CD14-positive monocyte (primary cell): ENCODE measurements at regions of chr6 and their contacts with region 1.

Region 1: DNA sequence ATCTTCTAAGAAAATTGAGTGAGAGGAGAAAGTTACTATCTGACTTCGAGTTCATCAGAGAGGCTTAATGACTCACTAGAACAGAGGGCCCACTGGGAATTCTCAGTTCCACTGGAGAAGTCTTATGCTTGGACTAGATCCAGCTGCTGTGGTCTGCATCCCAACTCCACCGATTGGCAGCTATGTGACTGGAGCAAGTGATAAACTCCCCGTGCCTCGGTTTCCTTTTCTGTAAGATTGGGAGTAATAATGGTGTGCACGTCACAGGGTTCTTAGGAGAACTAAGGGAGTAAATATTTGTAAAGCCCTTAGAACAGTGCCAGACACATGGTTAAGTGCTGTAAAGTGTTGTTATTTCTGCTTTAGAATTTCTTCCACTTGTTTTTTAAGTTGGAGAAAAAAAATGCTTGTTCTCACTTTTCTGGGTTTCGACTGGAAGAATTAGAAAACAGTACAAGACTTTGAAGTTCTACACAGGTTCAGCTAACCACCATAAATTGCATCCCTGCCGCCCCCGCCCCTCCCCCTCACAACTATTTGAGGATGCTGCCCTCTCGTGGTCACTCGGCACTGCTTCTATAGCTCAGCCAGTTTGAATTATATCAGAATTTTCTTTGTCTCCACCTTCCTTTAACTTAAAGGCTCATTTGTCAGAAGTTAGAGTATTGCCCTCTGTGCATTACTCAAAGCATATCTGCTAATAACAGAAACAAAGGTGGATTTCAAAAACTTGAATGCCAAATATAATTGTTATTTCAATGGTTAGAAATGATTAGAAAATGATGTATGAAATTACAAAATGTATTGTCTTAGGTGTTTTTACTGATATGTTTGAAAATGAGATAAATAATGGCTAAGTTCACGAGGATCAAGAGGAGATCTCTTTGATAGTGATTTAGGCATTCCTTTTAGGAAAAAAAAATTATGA is 95.0 kb upstream of the IFNGR1 start:
- DNase-seq: peak; percentile 54 to 80 (median 72)
- H3K4me3 ChIP-seq: no peak overlapping the region
- H3K4me3 Mint-ChIP-seq: no peak overlapping the region
- H3K27ac ChIP-seq: no peak overlapping the region
- H3K27ac Mint-ChIP-seq: peak overlapping the region in 1 of 7 donors; percentile 68
- H3K4me1 ChIP-seq: peaks cover 28 to 32% of the 10 kb centered on the region in 2 donors
- H3K4me1 Mint-ChIP-seq: peaks cover 29% of the 10 kb centered on the region
- H3K27me3 ChIP-seq: no peaks in the 10 kb centered on the region
- H3K27me3 Mint-ChIP-seq: peaks cover 0 to 4% (median 3%) of the 10 kb centered on the region in 3 donors
- CTCF ChIP-seq: peak; percentile 83

Region 2: GRCh38 chr6:137148306-137149034 is 165.7 kb before region 1 on chr6:
- intact Hi-C with region 1: loop called (anchors 10 kb)
- DNase-seq: peak; percentile 94 to 99 (median 97)
- H3K4me3 ChIP-seq: peak overlapping the region in 1 of 3 experiments; percentile 3
- H3K4me3 Mint-ChIP-seq: peak overlapping the region in 1 of 2 donors; percentile 19
- H3K27ac ChIP-seq: peak overlapping the region; percentile 73 to 94
- H3K27ac Mint-ChIP-seq: peak overlapping the region; percentile 94 to 98 (median 95)
- H3K4me1 ChIP-seq: peaks cover 39 to 43% of the 10 kb centered on the region in 2 donors
- H3K4me1 Mint-ChIP-seq: peaks cover 52% of the 10 kb centered on the region
- H3K27me3 ChIP-seq: no peaks in the 10 kb centered on the region
- H3K27me3 Mint-ChIP-seq: no peaks in the 10 kb centered on the region
- CTCF ChIP-seq: no peak

Region 3: DNA sequence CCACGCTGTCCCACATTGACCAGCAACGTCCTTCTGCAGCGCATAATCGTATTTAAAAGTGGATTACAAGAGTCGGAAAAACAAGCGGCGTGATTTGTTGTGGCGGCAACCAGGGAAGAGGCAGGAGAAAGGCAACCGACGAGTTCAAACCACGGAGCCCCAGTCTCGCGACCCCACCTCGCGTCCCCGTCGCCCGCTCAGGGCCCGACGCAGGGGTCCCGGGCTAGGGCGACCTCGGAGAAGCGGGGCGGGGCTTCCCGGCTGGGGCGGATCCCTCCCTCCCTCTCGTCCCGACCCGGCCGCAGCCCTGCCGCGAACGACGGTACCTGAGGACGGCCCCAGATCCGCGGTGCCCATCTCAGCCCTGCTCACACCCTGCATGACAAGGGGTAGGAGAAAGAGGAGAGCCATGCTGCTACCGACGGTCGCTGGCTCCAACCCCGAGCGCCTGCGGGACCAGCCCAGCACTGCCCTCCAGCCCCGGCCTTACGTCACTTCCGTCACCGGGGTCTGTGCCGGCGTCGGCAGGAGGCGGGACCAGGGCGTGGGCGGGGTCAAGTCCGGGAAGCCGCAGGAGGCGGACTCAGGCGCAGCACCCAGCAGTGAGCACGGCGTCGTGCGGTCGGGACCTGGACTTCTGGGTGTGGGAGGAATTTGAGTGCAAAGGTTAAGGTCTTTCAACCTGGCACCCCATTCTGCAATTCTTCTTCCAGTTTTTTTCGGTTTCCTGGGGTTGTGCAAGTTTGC is 95.1 kb before region 1 on chr6 and contains the start of gene IFNGR1:
- intact Hi-C with region 1: loop called in 1 of 2 experiments (anchors 5 kb)
- DNase-seq: peak; percentile 93 to 97 (median 97)
- H3K4me3 ChIP-seq: peak within 1 kb of the TSS; percentile 68 to 94 (median 90)
- H3K4me3 Mint-ChIP-seq: peak within 1 kb of the TSS; percentile 94 to 99
- H3K27ac ChIP-seq: peak within 1 kb of the TSS; percentile 99
- H3K27ac Mint-ChIP-seq: peak within 1 kb of the TSS; percentile 99 to 100 (median 100)
- H3K4me1 ChIP-seq: peaks cover 79 to 84% of the 10 kb centered on the region in 2 donors
- H3K4me1 Mint-ChIP-seq: peaks cover 76% of the 10 kb centered on the region
- H3K27me3 ChIP-seq: no peaks in the 10 kb centered on the region
- H3K27me3 Mint-ChIP-seq: peaks cover 0 to 4% (median 0%) of the 10 kb centered on the region in 3 donors
- CTCF ChIP-seq: no peak
- polyA plus RNA-seq, gene IFNGR1: 204 to 372 (median 364) TPM

Region 4: DNA sequence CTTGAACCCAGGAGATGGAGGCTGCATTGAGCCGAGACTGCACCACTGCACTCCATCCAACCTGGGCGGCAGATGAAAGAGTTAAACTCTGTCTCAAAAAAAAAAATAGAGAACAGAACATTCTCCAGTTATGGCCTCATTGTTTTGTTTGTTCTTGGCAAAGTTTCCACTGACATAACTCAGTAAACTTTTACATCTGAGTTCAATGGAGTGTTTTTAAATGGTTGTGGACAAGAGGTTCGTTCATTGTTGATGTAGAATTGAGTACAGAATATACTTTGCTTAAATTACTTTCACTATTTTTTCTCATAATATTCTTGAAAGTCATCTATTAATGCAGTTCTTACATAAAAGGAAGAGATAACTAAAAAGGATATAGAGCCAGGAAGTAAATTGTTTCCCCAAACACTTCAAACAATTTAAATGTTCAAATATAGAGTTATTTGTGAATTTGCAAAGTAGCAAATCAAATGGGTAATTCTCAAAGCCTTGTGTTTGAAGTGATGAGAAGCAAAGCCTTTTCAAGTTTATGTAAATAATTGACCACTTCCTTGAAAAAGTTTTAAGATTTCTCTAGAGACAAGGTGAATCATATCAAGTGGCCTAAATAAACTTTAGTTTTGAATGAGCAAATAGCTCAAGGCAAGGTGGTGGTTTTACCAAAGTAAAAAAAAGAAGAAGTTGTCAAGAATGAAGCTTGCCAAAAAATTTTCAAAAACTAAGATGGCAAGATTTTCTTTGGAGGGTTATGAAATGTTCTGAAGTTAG is 52.6 kb before region 1 on chr6:
- intact Hi-C with region 1: loop called in 1 of 2 experiments (anchors 5 kb)
- DNase-seq: no peak
- H3K4me3 ChIP-seq: no peak overlapping the region
- H3K4me3 Mint-ChIP-seq: no peak overlapping the region
- H3K27ac ChIP-seq: no peak overlapping the region
- H3K27ac Mint-ChIP-seq: no peak overlapping the region
- H3K4me1 ChIP-seq: peaks cover 9 to 14% of the 10 kb centered on the region in 2 donors
- H3K4me1 Mint-ChIP-seq: peaks cover 20% of the 10 kb centered on the region
- H3K27me3 ChIP-seq: no peaks in the 10 kb centered on the region
- H3K27me3 Mint-ChIP-seq: no peaks in the 10 kb centered on the region
- CTCF ChIP-seq: no peak

Region 5: DNA sequence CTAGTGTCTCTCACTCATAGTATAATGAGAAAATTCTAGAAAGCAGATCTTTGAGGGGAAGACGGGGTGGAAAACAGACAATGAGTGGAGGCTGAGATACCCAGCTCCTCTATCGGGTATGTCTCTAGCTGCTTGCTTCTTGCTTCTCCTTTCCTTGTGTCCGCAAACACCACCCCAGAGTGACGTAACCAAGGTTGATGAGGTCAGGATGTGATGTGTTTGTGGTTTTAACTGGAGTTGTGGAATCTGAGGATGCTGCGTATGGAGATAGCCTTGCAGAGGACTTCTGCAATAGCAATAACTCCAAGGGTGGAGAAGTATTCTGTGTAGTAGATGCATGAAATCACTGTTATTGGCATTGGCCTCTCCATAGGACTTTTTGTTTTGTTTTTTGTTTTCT is 37.7 kb after region 1 on chr6:
- intact Hi-C with region 1: no loop called
- DNase-seq: peak; percentile 88 to 97 (median 95)
- H3K4me3 ChIP-seq: peak overlapping the region in 1 of 3 experiments; percentile 34
- H3K4me3 Mint-ChIP-seq: peak overlapping the region in 1 of 2 donors; percentile 72
- H3K27ac ChIP-seq: peak overlapping the region in 1 of 2 donors; percentile 58
- H3K27ac Mint-ChIP-seq: peak overlapping the region; percentile 86 to 94 (median 92)
- H3K4me1 ChIP-seq: peaks cover 11 to 12% of the 10 kb centered on the region in 2 donors
- H3K4me1 Mint-ChIP-seq: peaks cover 10% of the 10 kb centered on the region
- H3K27me3 ChIP-seq: no peaks in the 10 kb centered on the region
- H3K27me3 Mint-ChIP-seq: peaks cover 0 to 5% (median 1%) of the 10 kb centered on the region in 3 donors
- CTCF ChIP-seq: no peak

Region 6: GRCh38 chr6:137399881-137400443 is 85.8 kb after region 1 on chr6:
- intact Hi-C with region 1: loop called in 1 of 2 experiments (anchors 10 kb)
- DNase-seq: no peak
- H3K4me3 ChIP-seq: no peak overlapping the region
- H3K4me3 Mint-ChIP-seq: no peak overlapping the region
- H3K27ac ChIP-seq: no peak overlapping the region
- H3K27ac Mint-ChIP-seq: no peak overlapping the region
- H3K4me1 ChIP-seq: peaks cover 18 to 20% of the 10 kb centered on the region in 2 donors
- H3K4me1 Mint-ChIP-seq: peaks cover 21% of the 10 kb centered on the region
- H3K27me3 ChIP-seq: no peaks in the 10 kb centered on the region
- H3K27me3 Mint-ChIP-seq: peaks cover 1 to 2% (median 2%) of the 10 kb centered on the region in 3 donors
- CTCF ChIP-seq: no peak

Region 7: GRCh38 chr6:137571854-137572253 is 257.7 kb after region 1 on chr6:
- intact Hi-C with region 1: no loop called
- DNase-seq: peak in 2 of 3 donors; percentile 6 to 8
- H3K4me3 ChIP-seq: no peak overlapping the region
- H3K4me3 Mint-ChIP-seq: no peak overlapping the region
- H3K27ac ChIP-seq: no peak overlapping the region
- H3K27ac Mint-ChIP-seq: no peak overlapping the region
- H3K4me1 ChIP-seq: no peaks in the 10 kb centered on the region
- H3K4me1 Mint-ChIP-seq: no peaks in the 10 kb centered on the region
- H3K27me3 ChIP-seq: peaks cover 9 to 18% of the 10 kb centered on the region in 2 donors
- H3K27me3 Mint-ChIP-seq: peaks cover 3 to 30% (median 7%) of the 10 kb centered on the region in 3 donors
- CTCF ChIP-seq: peak; percentile 72